Heart left ventricle (tissue), 16 donors: ENCODE measurements at regions of chr14 and their contacts with region 1.

Region 1: GRCh38 chr14:61321385-61322010 is at the start of gene PRKCH:
- DNase-seq: peak; percentile 76 to 90 (median 83)
- ATAC-seq: peak; percentile 39 to 81 (median 78)
- H3K4me3 ChIP-seq: peak within 1 kb of the TSS; percentile 63 to 89 (median 77)
- H3K27ac ChIP-seq: peak within 1 kb of the TSS; percentile 75 to 95 (median 89)
- H3K4me1 ChIP-seq: peaks cover 0 to 20% (median 7%) of the 10 kb centered on the region in 12 donors
- H3K27me3 ChIP-seq: peaks cover 0 to 20% (median 4%) of the 10 kb centered on the region in 9 donors
- CTCF ChIP-seq: peak in 7 of 12 donors; percentile 12 to 44 (median 26)
- POLR2A ChIP-seq: peak in 1 of 2 donors; percentile 30
- total RNA-seq, gene PRKCH: 13.2 to 42.1 (median 21.7) TPM

Region 2: DNA sequence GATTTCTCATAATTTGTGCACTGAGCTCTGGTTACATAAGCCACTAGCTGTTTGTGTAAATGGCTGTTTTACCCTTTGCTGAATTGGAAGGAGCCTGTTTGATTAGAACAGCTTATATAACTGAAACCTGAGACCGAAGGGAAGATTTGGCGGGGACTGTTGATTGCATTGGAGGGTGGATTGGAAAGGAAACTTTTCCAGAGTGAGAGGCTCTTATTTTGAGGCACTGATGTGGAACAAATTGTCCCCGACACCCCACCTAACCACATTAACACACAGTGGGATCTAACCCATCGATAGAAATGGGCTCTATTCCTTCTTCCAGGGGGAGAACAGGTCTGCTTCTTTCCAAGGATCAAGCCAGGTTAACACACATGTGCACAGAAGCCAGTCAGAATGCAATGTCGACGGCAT is 92.0 kb before region 1 on chr14:
- intact Hi-C with region 1: no loop called
- DNase-seq: no peak
- ATAC-seq: no peak
- H3K4me3 ChIP-seq: no peak overlapping the region
- H3K27ac ChIP-seq: peak overlapping the region in 3 of 12 donors; percentile 13 to 22 (median 19)
- H3K4me1 ChIP-seq: peaks cover 0 to 5% (median 0%) of the 10 kb centered on the region in 12 donors
- H3K27me3 ChIP-seq: peaks cover 0 to 26% (median 0%) of the 10 kb centered on the region in 9 donors
- CTCF ChIP-seq: no peak
- POLR2A ChIP-seq: no peak

Region 3: DNA sequence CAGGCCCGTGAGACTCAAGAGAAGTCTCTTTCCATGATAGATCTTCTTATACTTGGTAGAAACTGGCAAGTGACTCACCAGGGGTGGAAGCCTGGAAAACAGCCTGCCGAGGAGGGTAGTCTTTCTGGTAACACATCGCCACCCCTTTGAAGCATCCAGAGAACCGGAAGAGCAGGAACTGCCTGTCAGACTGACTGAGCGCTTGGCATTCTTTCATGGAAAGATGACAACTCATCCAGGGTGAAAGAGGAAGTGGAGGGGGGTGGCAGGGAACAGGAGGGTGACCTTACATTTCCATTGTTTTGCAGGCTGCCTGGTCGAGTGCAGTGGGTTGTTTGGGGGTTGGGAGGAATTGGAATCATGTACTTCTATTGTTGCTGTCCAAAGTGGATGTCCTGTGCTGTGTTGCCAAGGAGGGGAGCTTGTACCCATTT is 34.4 kb after region 1 on chr14:
- intact Hi-C with region 1: loop called in 1 of 10 experiments (anchors 5 kb)
- DNase-seq: peak in 4 of 5 donors; percentile 45 to 78 (median 64)
- ATAC-seq: peak; percentile 75 to 94 (median 90)
- H3K4me3 ChIP-seq: no peak overlapping the region
- H3K27ac ChIP-seq: peak overlapping the region; percentile 5 to 75 (median 50)
- H3K4me1 ChIP-seq: peaks cover 0 to 61% (median 9%) of the 10 kb centered on the region in 12 donors
- H3K27me3 ChIP-seq: no peaks in the 10 kb centered on the region
- CTCF ChIP-seq: no peak
- POLR2A ChIP-seq: no peak

Region 4: DNA sequence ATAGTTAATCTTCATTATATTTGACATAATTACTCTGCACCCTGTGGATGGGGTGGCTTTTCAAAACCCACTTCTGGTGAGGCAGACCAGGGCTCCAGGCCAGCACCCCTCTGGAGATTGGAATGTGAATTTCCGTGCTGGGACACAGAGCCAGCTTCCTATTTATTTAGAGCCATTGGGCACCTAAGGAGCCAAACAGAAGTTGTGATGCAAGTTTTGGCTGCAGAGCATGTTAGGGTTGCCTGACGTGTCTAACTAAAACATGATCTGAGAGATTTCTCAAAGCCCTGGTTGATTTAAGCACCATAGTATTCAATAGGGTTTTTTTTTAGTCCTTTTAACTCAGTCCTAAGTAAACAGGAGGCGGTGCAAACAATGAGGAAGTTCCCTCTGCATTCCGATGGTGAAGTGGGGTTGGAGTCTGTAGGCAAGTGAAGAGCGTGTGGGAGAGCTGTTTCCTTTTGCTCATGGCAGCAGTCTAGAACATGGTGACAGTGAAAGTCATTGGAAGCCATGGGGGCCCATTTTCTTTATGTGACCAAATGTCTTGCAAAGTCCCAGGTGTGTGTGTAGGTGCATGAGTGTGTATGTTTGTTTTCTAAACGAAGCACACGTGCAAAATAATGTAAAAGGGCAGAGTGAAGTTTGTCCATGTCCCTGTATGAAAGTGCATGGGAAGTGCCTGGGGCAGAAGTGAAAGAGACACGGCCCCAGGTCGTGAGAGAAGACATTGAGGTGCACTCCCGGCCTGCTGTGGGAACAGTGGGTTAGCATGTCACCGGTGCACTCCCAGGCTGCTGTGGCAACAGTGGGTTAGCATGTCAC is 117.6 kb after region 1 on chr14:
- intact Hi-C with region 1: loop called in 3 of 10 experiments (anchors 5 to 10 kb)
- DNase-seq: peak in 2 of 5 donors; percentile 30 to 40
- ATAC-seq: peak; percentile 76 to 82 (median 78)
- H3K4me3 ChIP-seq: peak overlapping the region in 5 of 12 donors; percentile 4 to 36 (median 7)
- H3K27ac ChIP-seq: peak overlapping the region in 8 of 12 donors; percentile 3 to 82 (median 25)
- H3K4me1 ChIP-seq: peaks cover 6 to 68% (median 30%) of the 10 kb centered on the region in 12 donors
- H3K27me3 ChIP-seq: no peaks in the 10 kb centered on the region
- CTCF ChIP-seq: no peak
- POLR2A ChIP-seq: no peak

Region 5: GRCh38 chr14:61456720-61457119 is 135.2 kb after region 1 on chr14:
- intact Hi-C with region 1: loop called in 6 of 10 experiments (anchors 5 kb)
- DNase-seq: peak in 4 of 5 donors; percentile 81 to 90 (median 85)
- ATAC-seq: peak in 3 of 4 donors; percentile 76 to 83 (median 78)
- H3K4me3 ChIP-seq: no peak overlapping the region
- H3K27ac ChIP-seq: no peak overlapping the region
- H3K4me1 ChIP-seq: peaks cover 0 to 38% (median 13%) of the 10 kb centered on the region in 12 donors
- H3K27me3 ChIP-seq: no peaks in the 10 kb centered on the region
- CTCF ChIP-seq: peak; percentile 78 to 94 (median 88)
- POLR2A ChIP-seq: no peak

Region 6: GRCh38 chr14:61493239-61493638 is 171.7 kb after region 1 on chr14:
- intact Hi-C with region 1: no loop called
- DNase-seq: no peak
- ATAC-seq: no peak
- H3K4me3 ChIP-seq: no peak overlapping the region
- H3K27ac ChIP-seq: no peak overlapping the region
- H3K4me1 ChIP-seq: peaks cover 0 to 68% (median 23%) of the 10 kb centered on the region in 12 donors
- H3K27me3 ChIP-seq: no peaks in the 10 kb centered on the region
- CTCF ChIP-seq: no peak
- POLR2A ChIP-seq: no peak